ENCODE measurements at regions of chr1 and their contacts with region 1.

Region 1: GRCh38 chr1:156551866-156552265 is 20.5 kb downstream of the IQGAP3 start:
- DNase-seq: no peak
- ATAC-seq: no peak
- H3K4me3 ChIP-seq: no peak overlapping the region
- H3K27ac ChIP-seq: no peak overlapping the region
- H3K4me1 ChIP-seq: peaks cover 15% of the 10 kb centered on the region
- H3K27me3 ChIP-seq: no peaks in the 10 kb centered on the region
- CTCF ChIP-seq: no peak
- EP300 ChIP-seq: no peak
- POLR2A ChIP-seq: no peak
- RAD21 ChIP-seq: no peak

Region 2: DNA sequence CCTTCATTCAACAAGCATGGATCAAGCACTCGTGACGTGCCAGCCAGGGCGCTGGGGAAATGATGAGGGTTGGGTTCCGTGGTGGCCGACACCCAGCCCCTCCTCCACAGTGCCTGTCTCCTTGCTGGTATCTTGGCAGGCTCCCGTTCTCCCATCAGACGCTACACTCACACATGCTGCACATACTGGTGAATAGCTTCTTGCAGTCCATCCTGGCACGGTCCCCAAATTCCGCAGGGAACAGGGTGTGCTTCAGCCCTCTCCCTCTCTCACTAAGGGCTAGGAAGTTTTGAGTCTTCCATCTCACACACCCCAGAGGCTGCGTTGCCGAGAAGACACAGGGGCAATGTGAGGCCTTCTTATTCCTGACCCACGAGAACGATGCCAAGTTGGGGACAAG is 41.2 kb before region 1 on chr1:
- CTCF ChIA-PET with region 1: no interaction called
- POLR2A ChIA-PET with region 1: no interaction called
- in situ Hi-C with region 1: no loop called
- intact Hi-C with region 1: no loop called
- DNase-seq: no peak
- ATAC-seq: no peak
- H3K4me3 ChIP-seq: no peak overlapping the region
- H3K27ac ChIP-seq: no peak overlapping the region
- H3K4me1 ChIP-seq: peaks cover 4% of the 10 kb centered on the region
- H3K27me3 ChIP-seq: peaks cover 4 to 53% of the 10 kb centered on the region in 2 experiments; a peak in 4 of 5 replicates
- CTCF ChIP-seq: no peak
- EP300 ChIP-seq: no peak
- POLR2A ChIP-seq: no peak
- RAD21 ChIP-seq: no peak

Region 3: GRCh38 chr1:156571949-156572662 is 20.2 kb after region 1 on chr1 and contains the start of gene IQGAP3:
- CTCF ChIA-PET with region 1: no interaction called
- POLR2A ChIA-PET with region 1: no interaction called
- in situ Hi-C with region 1: no loop called
- intact Hi-C with region 1: loop called (anchors 1 kb)
- DNase-seq: peak; percentile 75
- ATAC-seq: peak; percentile 100
- H3K4me3 ChIP-seq: peak within 1 kb of the TSS; percentile 85 to 95 (median 89)
- H3K27ac ChIP-seq: peak within 1 kb of the TSS; percentile 21
- H3K4me1 ChIP-seq: peaks cover 24% of the 10 kb centered on the region
- H3K27me3 ChIP-seq: peaks cover 0 to 12% of the 10 kb centered on the region in 2 experiments; a peak in 1 of 5 replicates
- CTCF ChIP-seq: no peak
- EP300 ChIP-seq: no peak
- POLR2A ChIP-seq: 0 out of 4 replicates have a peak, but pooled peaks of 1 of the 2 experiments have one; percentile 37
- RAD21 ChIP-seq: peak; percentile 26; the same call in 1 of the 2 replicates
- total RNA-seq, gene IQGAP3: 6.7 and 14.1 TPM in 2 replicates